HCT116 (cell line): ENCODE measurements at regions of chrX and their contacts with region 1.

Region 1: DNA sequence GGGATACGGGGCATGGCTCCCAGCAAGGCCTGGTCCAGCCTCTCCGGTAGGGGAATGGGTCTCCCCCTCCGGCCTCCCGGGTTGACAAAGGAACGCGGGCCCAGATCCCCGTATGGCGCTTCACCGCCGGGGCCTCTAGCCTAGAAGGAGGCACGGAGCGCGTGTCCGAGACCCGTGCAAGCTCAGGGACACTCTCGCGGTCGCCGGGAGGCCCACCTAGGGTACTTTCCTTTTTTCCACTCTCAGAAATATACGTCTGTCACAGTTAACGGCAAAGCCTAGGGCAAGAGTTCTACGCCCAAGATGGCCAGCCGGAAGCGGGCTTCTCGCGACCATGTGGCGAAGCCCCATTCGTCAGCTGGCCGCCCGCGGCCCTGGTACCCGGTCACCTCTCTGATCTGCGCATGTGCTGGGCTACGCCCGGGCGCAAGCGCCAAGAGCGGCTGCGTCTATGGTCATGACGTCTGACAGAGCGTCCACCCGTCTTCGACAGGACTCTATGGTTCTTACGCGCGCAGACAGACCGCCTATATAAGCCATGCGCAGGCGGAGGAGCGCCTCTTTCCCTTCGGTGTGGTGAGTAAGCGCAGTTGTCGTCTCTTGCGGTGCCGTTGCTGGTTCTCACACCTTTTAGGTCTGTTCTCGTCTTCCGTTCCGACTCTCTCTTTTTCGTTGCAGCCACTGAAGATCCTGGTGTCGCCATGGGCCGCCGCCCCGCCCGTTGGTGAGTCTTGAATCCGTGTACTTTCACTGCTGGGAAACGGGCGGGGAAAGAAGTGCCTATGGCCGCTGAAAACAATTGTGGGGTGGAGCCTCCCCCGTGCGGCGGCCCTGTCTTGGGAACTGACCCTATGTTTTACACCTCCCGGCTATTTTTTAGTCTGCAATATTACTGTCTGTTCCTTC is at the start of gene RPL10:
- DNase-seq: peak; percentile 93
- ATAC-seq: peak; percentile 68
- H3K4me3 ChIP-seq: peak within 1 kb of the TSS; percentile 84
- H3K27ac ChIP-seq: peak within 1 kb of the TSS; percentile 92
- H3K4me1 ChIP-seq: peaks cover 0 to 23% of the 10 kb centered on the region in 2 experiments; a peak in 2 of 4 replicates
- H3K27me3 ChIP-seq: no peaks in the 10 kb centered on the region
- CTCF ChIP-seq: no peak
- POLR2A ChIP-seq: peak; percentile 98
- RAD21 ChIP-seq: no peak
- total RNA-seq, gene RPL10: 3,069 TPM

Region 2: DNA sequence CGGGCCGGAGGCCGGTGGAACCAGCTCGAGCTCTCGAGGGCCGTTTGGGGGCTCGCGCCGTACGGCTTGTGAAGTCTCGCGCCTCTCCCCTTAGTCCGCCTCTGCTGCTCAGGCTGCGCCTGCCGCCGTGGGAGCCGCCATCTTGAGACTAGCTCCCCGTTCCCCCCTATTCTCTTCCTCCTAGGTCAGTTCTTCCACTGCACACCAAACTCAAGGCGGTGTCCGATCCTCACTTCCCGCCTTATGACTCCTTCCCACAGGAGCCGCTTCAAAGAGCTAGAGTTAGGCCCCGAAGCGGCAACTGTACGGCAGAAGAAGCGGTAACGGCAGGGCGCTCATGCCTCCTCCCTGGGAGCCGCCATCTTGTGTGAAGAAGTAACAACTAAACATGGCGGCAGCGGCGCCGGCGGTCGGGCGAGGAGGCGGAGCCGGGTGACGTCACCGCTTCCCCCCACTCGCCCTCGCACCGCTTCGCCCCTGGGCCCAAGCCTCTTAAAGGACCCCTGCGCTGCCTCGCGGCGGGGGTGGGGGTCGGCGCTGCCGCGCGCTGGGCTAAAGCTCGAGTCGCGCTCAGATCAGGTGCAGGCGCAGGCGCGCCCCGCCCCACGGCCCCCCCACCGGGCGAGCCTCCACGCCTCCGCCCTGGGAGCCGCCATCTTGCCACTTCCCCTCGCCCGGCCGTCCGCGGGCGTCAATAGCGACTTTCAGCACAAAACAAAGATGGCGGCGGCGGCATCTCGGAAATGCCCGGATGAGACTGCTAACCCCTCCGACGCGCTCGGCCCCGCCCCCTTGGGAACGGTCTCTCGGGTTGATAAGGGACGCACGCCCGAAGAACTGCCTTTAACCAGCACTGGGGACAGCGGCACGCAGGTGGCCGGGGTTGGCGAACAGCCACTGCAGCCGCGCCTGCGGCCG is 426.4 kb before region 1 on chrX and contains the start of gene HCFC1:
- CTCF ChIA-PET with region 1: no interaction called
- POLR2A ChIA-PET with region 1: no interaction called
- RAD21 ChIA-PET with region 1: no interaction called
- intact Hi-C with region 1: loop called (anchors 10 kb)
- DNase-seq: peak; percentile 69
- ATAC-seq: peak; percentile 47
- H3K4me3 ChIP-seq: peak within 1 kb of the TSS; percentile 75 to 78
- H3K27ac ChIP-seq: peak within 1 kb of the TSS; percentile 90
- H3K4me1 ChIP-seq: peaks cover 12 to 28% of the 10 kb centered on the region in 2 experiments
- H3K27me3 ChIP-seq: no peaks in the 10 kb centered on the region
- CTCF ChIP-seq: no peak
- POLR2A ChIP-seq: no peak
- RAD21 ChIP-seq: no peak
- total RNA-seq, gene HCFC1: 72.8 TPM

Region 3: GRCh38 chrX:154370882-154371770 is 26.9 kb before region 1 on chrX:
- CTCF ChIA-PET with region 1: interaction called, 6 read pairs
- POLR2A ChIA-PET with region 1: interaction called, 13 read pairs
- RAD21 ChIA-PET with region 1: no interaction called
- intact Hi-C with region 1: no loop called
- DNase-seq: peak; percentile 76
- ATAC-seq: peak; percentile 49
- H3K4me3 ChIP-seq: peak overlapping the region; percentile 74 to 78
- H3K27ac ChIP-seq: peak overlapping the region; percentile 82
- H3K4me1 ChIP-seq: peaks cover 14 to 54% of the 10 kb centered on the region in 2 experiments
- H3K27me3 ChIP-seq: no peaks in the 10 kb centered on the region
- CTCF ChIP-seq: no peak
- POLR2A ChIP-seq: peak; percentile 93
- RAD21 ChIP-seq: no peak

Region 4: GRCh38 chrX:154409222-154409871 is 11.3 kb after region 1 on chrX and contains the start of gene DNASE1L1:
- CTCF ChIA-PET with region 1: interaction called, 5 read pairs
- POLR2A ChIA-PET with region 1: interaction called, 12 read pairs
- RAD21 ChIA-PET with region 1: no interaction called
- intact Hi-C with region 1: no loop called
- DNase-seq: no peak
- ATAC-seq: peak; percentile 81
- H3K4me3 ChIP-seq: peak within 1 kb of the TSS; percentile 54 to 64
- H3K27ac ChIP-seq: peak within 1 kb of the TSS; percentile 91
- H3K4me1 ChIP-seq: peaks cover 15 to 35% of the 10 kb centered on the region in 2 experiments
- H3K27me3 ChIP-seq: no peaks in the 10 kb centered on the region
- CTCF ChIP-seq: no peak
- POLR2A ChIP-seq: no peak
- RAD21 ChIP-seq: no peak
- total RNA-seq, gene DNASE1L1: 16.5 TPM

Region 5: GRCh38 chrX:154464806-154465365 is 66.8 kb after region 1 on chrX:
- CTCF ChIA-PET with region 1: no interaction called
- POLR2A ChIA-PET with region 1: no interaction called
- RAD21 ChIA-PET with region 1: no interaction called
- intact Hi-C with region 1: no loop called
- DNase-seq: no peak
- ATAC-seq: no peak
- H3K4me3 ChIP-seq: no peak overlapping the region
- H3K27ac ChIP-seq: no peak overlapping the region
- H3K4me1 ChIP-seq: no peaks in the 10 kb centered on the region
- H3K27me3 ChIP-seq: no peaks in the 10 kb centered on the region
- CTCF ChIP-seq: no peak
- POLR2A ChIP-seq: no peak
- RAD21 ChIP-seq: no peak

Region 6: DNA sequence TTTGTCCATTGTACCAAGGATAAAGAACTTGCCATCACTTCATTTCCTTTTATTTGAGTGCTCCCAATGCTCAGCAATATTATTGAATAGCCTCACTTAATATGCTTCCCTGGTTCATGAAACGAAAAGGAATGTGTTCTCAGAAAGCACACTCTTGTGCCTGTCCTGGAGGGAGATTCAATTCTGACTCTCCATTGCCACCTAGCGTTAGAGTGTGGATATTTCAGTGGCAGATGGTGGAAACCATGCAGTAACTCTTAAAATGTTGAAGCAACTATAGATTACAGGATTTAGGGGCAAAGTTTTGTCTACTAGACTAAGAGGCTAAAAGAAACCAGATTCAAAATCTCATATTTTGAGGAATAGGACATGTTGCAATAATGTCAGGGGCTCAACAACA is 316.9 kb after region 1 on chrX:
- CTCF ChIA-PET with region 1: no interaction called
- POLR2A ChIA-PET with region 1: no interaction called
- RAD21 ChIA-PET with region 1: no interaction called
- intact Hi-C with region 1: no loop called
- DNase-seq: peak; percentile 23
- ATAC-seq: peak; percentile 89
- H3K4me3 ChIP-seq: no peak overlapping the region
- H3K27ac ChIP-seq: no peak overlapping the region
- H3K4me1 ChIP-seq: no peaks in the 10 kb centered on the region
- H3K27me3 ChIP-seq: no peaks in the 10 kb centered on the region
- CTCF ChIP-seq: peak; percentile 63 to 70 (median 64); a peak in 5 of 6 replicates
- POLR2A ChIP-seq: no peak
- RAD21 ChIP-seq: peak; percentile 72